ENCODE measurements at regions of chr17 and their contacts with region 1.

Region 1: DNA sequence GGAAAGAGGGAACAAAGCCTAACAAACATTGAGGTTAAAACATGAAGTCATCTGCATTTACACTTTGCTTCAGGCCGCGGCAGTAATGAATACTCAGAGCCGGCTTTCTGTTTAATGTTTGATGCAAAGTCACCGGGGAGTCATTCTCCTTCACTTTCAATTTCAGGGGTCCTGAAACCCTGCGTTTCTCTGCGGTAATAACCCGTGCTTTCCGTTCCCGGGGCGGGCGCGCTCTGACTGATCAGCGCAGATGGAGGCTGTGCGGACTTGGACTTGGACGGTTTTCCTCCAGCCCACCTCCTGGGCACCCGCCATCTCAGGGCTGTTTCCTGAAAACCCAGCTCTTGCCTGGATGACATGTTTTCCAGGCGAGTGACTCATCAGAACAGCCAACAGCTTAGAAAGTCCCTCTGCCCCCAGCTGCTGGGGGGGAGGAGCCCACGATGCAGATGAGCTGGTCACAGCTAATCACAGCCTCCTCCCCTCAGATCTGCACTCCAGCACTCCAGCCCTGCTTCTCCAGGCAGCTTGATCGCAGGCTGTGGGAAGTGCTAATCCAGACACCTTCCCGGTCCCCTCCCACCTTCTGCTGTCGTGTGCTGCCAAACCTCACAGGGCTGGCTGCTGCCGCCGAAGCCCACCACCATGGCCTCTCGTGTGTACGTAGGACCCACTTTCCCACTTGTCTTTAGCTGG is 158.6 kb upstream of the CHMP6 start:
- DNase-seq: peak; percentile 97
- H3K4me3 ChIP-seq: peak overlapping the region; percentile 35 to 56 (median 52)
- H3K27ac ChIP-seq: peak overlapping the region; percentile 89 to 93 (median 91)
- H3K4me1 ChIP-seq: peaks cover 0 to 26% (median 22%) of the 10 kb centered on the region in 4 donors
- H3K27me3 ChIP-seq: no peaks in the 10 kb centered on the region
- CTCF ChIP-seq: no peak
- EP300 ChIP-seq: peak in 1 of 4 donors; percentile 61
- POLR2A ChIP-seq: peak; percentile 58 to 75

Region 2: GRCh38 chr17:80751070-80751945 is 81.7 kb before region 1 on chr17:
- intact Hi-C with region 1: loop called (anchors 5 kb)
- DNase-seq: peak; percentile 89
- H3K4me3 ChIP-seq: peak overlapping the region in 2 of 4 donors; percentile 10 to 13
- H3K27ac ChIP-seq: peak overlapping the region; percentile 20 to 82 (median 57)
- H3K4me1 ChIP-seq: peaks cover 0 to 40% (median 26%) of the 10 kb centered on the region in 4 donors
- H3K27me3 ChIP-seq: no peaks in the 10 kb centered on the region
- CTCF ChIP-seq: no peak
- EP300 ChIP-seq: no peak
- POLR2A ChIP-seq: no peak

Region 3: DNA sequence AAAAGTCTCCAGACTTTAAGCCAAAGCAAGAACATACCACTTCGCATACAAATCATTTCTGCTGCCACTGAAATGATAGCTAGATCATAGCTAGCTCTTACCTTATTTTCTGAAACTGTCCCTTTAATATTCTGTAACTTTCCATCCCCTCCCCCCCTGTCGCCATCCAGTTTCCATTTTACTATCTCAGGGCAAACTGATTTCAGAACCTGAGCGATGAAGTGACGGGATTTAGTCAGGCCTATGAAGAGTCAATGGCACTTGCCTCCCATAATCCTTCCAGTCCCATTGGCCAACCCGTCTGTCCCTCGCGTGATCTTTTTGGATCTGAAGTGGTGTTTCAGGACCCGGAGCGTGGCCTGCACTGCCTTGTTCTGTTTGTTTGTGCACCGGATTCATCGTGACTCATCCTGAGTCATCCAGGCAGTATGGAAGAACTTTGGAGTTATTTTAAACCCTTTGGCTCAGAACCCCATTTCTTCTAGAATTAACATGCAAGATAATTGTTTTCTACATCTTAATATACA is 41.2 kb before region 1 on chr17:
- intact Hi-C with region 1: loop called (anchors 5 kb)
- DNase-seq: peak; percentile 93
- H3K4me3 ChIP-seq: no peak overlapping the region
- H3K27ac ChIP-seq: peak overlapping the region; percentile 77 to 86 (median 78)
- H3K4me1 ChIP-seq: peaks cover 0 to 63% (median 45%) of the 10 kb centered on the region in 4 donors
- H3K27me3 ChIP-seq: no peaks in the 10 kb centered on the region
- CTCF ChIP-seq: no peak
- EP300 ChIP-seq: peak in 1 of 4 donors; percentile 53
- POLR2A ChIP-seq: no peak

Region 4: DNA sequence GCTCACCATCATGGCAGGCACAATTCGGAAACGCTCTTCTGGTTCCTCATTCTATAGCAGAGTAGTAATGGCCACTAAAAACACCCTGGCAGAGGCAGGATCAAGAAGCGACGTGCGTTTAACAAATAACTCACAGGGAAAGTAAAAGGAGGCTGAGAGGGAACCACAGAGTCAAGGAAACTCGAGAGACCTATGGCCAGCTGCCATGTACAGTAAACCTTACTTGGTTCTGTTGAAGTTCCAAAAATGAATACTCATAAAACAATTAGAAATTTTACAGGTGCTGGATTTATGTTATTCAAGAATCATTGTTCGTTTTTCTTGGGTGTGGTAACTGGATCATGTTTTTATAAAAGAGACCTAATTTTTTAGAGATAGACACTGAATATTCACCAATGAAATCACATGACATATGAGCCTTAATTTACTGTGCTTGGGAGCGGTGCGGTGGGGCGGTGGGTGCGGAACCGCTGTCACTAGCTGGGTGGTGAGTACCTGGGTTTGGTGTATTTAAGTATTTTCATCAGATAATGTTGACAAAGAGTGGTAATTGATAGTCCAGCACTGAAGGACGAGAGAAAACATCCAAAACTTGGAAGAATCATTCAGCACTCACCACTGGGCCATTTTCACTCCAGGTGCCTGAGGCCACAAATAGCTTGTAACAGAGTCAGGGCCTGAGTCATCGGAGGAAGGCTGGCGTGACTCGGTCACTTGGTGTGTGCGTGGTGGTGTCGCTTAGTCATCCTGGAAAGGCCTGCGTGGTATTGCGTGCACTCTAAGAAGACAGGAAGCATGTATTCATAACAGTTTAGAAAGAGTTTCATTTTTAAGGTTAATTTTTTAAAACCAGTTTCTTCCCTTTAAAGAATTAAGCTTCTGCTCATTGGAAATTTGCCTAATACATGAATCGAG is 23.2 kb after region 1 on chr17:
- intact Hi-C with region 1: loop called (anchors 2 kb)
- DNase-seq: peak; percentile 90
- H3K4me3 ChIP-seq: no peak overlapping the region
- H3K27ac ChIP-seq: peak overlapping the region; percentile 22 to 76 (median 63)
- H3K4me1 ChIP-seq: peaks cover 0 to 48% (median 37%) of the 10 kb centered on the region in 4 donors
- H3K27me3 ChIP-seq: no peaks in the 10 kb centered on the region
- CTCF ChIP-seq: no peak
- EP300 ChIP-seq: peak in 1 of 4 donors; percentile 79
- POLR2A ChIP-seq: no peak

Measured in sigmoid colon (tissue), 7 donors.